ENCODE measurements at regions of chr5 and their contacts with region 1.

Region 1: GRCh38 chr5:129904102-129904666 is at the start of gene CHSY3:
- DNase-seq: no peak
- ATAC-seq: peak; percentile 73
- H3K4me3 ChIP-seq: peak within 1 kb of the TSS; percentile 41; the same call in 1 of the 2 replicates
- H3K27ac ChIP-seq: no peak within 1 kb of the TSS
- H3K4me1 ChIP-seq: no peaks in the 10 kb centered on the region
- H3K27me3 ChIP-seq: peaks cover 6 to 10% of the 10 kb centered on the region in 2 experiments
- CTCF ChIP-seq: no peak
- EP300 ChIP-seq: no peak
- POLR2A ChIP-seq: no peak
- RAD21 ChIP-seq: no peak
- polyA plus RNA-seq, gene CHSY3: not detected

Region 2: DNA sequence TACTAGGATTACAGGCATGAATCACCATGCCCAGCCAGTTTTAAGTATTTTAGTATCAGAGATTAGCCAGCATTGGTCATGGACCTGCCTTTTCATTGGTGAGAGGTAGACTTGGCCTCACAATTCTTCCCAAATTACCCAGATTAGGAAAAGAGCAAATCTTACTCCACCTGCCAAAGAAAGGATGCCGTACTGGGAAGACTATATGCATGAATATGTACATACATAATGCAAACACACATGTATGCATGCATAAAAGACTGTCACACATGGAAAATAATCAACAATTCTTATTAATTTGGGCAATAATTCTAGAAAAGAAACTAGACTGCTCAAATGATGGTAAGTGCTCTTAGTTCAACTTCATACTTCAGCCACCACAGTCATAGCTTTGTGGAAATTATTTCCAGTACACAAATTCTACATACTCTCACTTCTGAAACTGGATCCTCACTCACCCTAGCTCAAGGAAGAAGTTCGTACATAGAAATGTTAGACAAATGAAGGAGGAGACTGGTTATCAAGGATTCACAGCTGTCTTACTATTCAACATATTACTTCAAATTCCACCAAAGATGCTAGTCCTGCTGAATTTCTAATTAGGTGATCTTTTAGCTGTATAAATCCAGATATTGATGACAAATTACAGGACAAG is 82.6 kb before region 1 on chr5:
- CTCF ChIA-PET with region 1: no interaction called
- POLR2A ChIA-PET with region 1: no interaction called
- RAD21 ChIA-PET with region 1: no interaction called
- SMC1A ChIA-PET with region 1: no interaction called
- in situ Hi-C with region 1: no loop called
- intact Hi-C with region 1: no loop called
- DNase-seq: no peak
- ATAC-seq: no peak
- H3K4me3 ChIP-seq: no peak overlapping the region
- H3K27ac ChIP-seq: no peak overlapping the region
- H3K4me1 ChIP-seq: no peaks in the 10 kb centered on the region
- H3K27me3 ChIP-seq: no peaks in the 10 kb centered on the region
- CTCF ChIP-seq: no peak
- EP300 ChIP-seq: no peak
- POLR2A ChIP-seq: no peak
- RAD21 ChIP-seq: no peak

Region 3: GRCh38 chr5:129884322-129884721 is 19.9 kb before region 1 on chr5:
- CTCF ChIA-PET with region 1: no interaction called
- POLR2A ChIA-PET with region 1: no interaction called
- RAD21 ChIA-PET with region 1: no interaction called
- SMC1A ChIA-PET with region 1: no interaction called
- in situ Hi-C with region 1: no loop called
- intact Hi-C with region 1: no loop called
- DNase-seq: no peak
- ATAC-seq: no peak
- H3K4me3 ChIP-seq: no peak overlapping the region
- H3K27ac ChIP-seq: no peak overlapping the region
- H3K4me1 ChIP-seq: no peaks in the 10 kb centered on the region
- H3K27me3 ChIP-seq: no peaks in the 10 kb centered on the region
- CTCF ChIP-seq: no peak
- EP300 ChIP-seq: no peak
- POLR2A ChIP-seq: no peak
- RAD21 ChIP-seq: no peak

Region 4: GRCh38 chr5:130155345-130156011 is 251.3 kb after region 1 on chr5:
- CTCF ChIA-PET with region 1: no interaction called
- POLR2A ChIA-PET with region 1: no interaction called
- RAD21 ChIA-PET with region 1: no interaction called
- SMC1A ChIA-PET with region 1: no interaction called
- in situ Hi-C with region 1: no loop called
- intact Hi-C with region 1: loop called (anchors 10 kb)
- DNase-seq: no peak
- ATAC-seq: no peak
- H3K4me3 ChIP-seq: no peak overlapping the region
- H3K27ac ChIP-seq: no peak overlapping the region
- H3K4me1 ChIP-seq: no peaks in the 10 kb centered on the region
- H3K27me3 ChIP-seq: no peaks in the 10 kb centered on the region
- CTCF ChIP-seq: no peak
- EP300 ChIP-seq: no peak
- POLR2A ChIP-seq: no peak
- RAD21 ChIP-seq: no peak